Left colon (tissue), 2 donors: ENCODE measurements at regions of chr9 and their contacts with region 1.

Region 1: GRCh38 chr9:35116898-35117551 is 1.4 kb upstream of the ATOSB start:
- DNase-seq: peak; percentile 91
- ATAC-seq: peak; percentile 56

Region 2: DNA sequence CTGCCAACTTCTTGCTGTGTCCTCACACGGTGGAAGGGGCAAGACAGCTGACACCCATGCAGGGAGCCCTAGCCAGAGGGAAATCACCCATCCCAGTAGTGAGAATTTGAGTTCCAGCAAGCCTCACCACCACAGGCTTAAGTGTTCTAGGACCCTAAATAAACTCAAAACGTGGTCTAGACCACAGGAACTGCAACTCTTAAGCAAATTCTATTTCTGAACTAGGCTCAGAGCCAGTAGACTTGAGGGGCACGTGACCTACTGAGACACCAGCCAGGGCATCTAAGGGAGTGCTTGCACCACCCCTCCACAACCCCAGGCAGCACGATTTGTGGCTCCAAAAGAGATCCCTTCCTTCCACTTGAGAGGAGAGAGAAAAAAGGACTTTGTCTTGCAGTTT is 255.0 kb before region 1 on chr9:
- intact Hi-C with region 1: no loop called
- DNase-seq: no peak
- ATAC-seq: no peak

Region 3: GRCh38 chr9:35258676-35259474 is 141.8 kb after region 1 on chr9:
- intact Hi-C with region 1: loop called in 1 of 2 experiments (anchors 5 kb)
- DNase-seq: peak; percentile 73 to 78
- ATAC-seq: peak; percentile 92

Region 4: GRCh38 chr9:35476596-35476995 is 359.6 kb after region 1 on chr9:
- intact Hi-C with region 1: loop called in 1 of 2 experiments (anchors 5 kb)
- DNase-seq: no peak
- ATAC-seq: peak; percentile 30